T-cell (primary cell): ENCODE measurements at regions of chr10 and their contacts with region 1.

Region 1: GRCh38 chr10:69468751-69469089 is 17.5 kb downstream of the TSPAN15 start:
- DNase-seq: no peak
- ATAC-seq: no peak
- H3K4me3 ChIP-seq: no peak overlapping the region
- H3K4me3 Mint-ChIP-seq: no peak overlapping the region
- H3K27ac ChIP-seq: no peak overlapping the region
- H3K27ac Mint-ChIP-seq: peak overlapping the region in 1 of 2 donors; percentile 22
- H3K4me1 ChIP-seq: peaks cover 0 to 24% of the 10 kb centered on the region in 2 experiments
- H3K4me1 Mint-ChIP-seq: peaks cover 12 to 44% (median 25%) of the 10 kb centered on the region in 3 donors
- H3K27me3 ChIP-seq: peaks cover 0 to 9% of the 10 kb centered on the region in 2 experiments
- H3K27me3 Mint-ChIP-seq: peaks cover 7 to 9% of the 10 kb centered on the region in 2 donors

Region 2: GRCh38 chr10:67969875-67970274 is 1498.8 kb before region 1 on chr10:
- CTCF ChIA-PET with region 1: no interaction called
- POLR2A ChIA-PET with region 1: interaction called in 1 of 2 experiments, 12 read pairs
- DNase-seq: no peak
- ATAC-seq: no peak
- H3K4me3 ChIP-seq: no peak overlapping the region
- H3K4me3 Mint-ChIP-seq: no peak overlapping the region
- H3K27ac ChIP-seq: no peak overlapping the region
- H3K27ac Mint-ChIP-seq: no peak overlapping the region
- H3K4me1 ChIP-seq: no peaks in the 10 kb centered on the region
- H3K4me1 Mint-ChIP-seq: peaks cover 12 to 15% (median 14%) of the 10 kb centered on the region in 3 donors
- H3K27me3 ChIP-seq: no peaks in the 10 kb centered on the region
- H3K27me3 Mint-ChIP-seq: no peaks in the 10 kb centered on the region